ENCODE measurements at regions of chr6 and their contacts with region 1.

Region 1: DNA sequence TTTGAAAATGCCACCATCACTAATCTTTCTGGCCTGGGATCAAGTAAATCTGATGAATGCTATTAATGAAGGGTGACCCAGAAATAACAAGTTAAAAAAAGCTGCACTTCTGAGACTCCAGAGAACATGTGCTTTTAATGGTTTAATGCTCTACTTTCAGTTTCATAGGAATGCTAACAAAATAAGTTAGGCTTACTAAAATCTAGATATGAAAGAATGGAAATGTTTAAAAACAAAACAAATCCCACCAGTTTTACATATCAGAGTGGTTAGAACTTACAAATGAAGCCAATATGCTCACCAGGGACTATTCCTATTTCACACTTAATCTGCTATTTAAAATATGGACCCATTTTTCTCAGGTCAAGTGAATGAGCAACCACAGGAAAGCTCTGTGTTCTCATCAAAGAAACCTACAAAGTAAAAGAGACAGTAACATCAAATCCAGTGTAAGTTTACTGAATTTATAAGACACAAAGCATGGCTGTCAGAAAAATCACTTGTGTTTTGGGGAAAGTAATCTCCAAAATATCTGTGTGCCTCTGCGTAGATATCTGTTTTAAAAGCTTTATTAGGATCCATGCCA is 40.3 kb downstream of the FYN start:
- DNase-seq: peak in 2 of 14 experiments; percentile 27 to 46
- ATAC-seq: no peak
- H3K4me3 ChIP-seq: no peak overlapping the region
- H3K4me3 Mint-ChIP-seq: peak overlapping the region; percentile 80
- H3K27ac ChIP-seq: peak overlapping the region in 1 of 2 donors; percentile 35
- H3K27ac Mint-ChIP-seq: no peak overlapping the region
- H3K4me1 ChIP-seq: peaks cover 52% of the 10 kb centered on the region
- H3K4me1 Mint-ChIP-seq: peaks cover 75% of the 10 kb centered on the region
- H3K27me3 ChIP-seq: no peaks in the 10 kb centered on the region
- H3K27me3 Mint-ChIP-seq: no peaks in the 10 kb centered on the region
- CTCF ChIP-seq: no peak

Region 2: GRCh38 chr6:110063594-110064263 is 1769.2 kb before region 1 on chr6:
- CTCF ChIA-PET with region 1: no interaction called
- POLR2A ChIA-PET with region 1: no interaction called
- intact Hi-C with region 1: no loop called
- DNase-seq: no peak
- ATAC-seq: no peak
- H3K4me3 ChIP-seq: no peak overlapping the region
- H3K4me3 Mint-ChIP-seq: no peak overlapping the region
- H3K27ac ChIP-seq: no peak overlapping the region
- H3K27ac Mint-ChIP-seq: no peak overlapping the region
- H3K4me1 ChIP-seq: no peaks in the 10 kb centered on the region
- H3K4me1 Mint-ChIP-seq: no peaks in the 10 kb centered on the region
- H3K27me3 ChIP-seq: peaks cover 13 to 22% of the 10 kb centered on the region in 2 experiments
- H3K27me3 Mint-ChIP-seq: peaks cover 29% of the 10 kb centered on the region
- CTCF ChIP-seq: no peak

Region 3: DNA sequence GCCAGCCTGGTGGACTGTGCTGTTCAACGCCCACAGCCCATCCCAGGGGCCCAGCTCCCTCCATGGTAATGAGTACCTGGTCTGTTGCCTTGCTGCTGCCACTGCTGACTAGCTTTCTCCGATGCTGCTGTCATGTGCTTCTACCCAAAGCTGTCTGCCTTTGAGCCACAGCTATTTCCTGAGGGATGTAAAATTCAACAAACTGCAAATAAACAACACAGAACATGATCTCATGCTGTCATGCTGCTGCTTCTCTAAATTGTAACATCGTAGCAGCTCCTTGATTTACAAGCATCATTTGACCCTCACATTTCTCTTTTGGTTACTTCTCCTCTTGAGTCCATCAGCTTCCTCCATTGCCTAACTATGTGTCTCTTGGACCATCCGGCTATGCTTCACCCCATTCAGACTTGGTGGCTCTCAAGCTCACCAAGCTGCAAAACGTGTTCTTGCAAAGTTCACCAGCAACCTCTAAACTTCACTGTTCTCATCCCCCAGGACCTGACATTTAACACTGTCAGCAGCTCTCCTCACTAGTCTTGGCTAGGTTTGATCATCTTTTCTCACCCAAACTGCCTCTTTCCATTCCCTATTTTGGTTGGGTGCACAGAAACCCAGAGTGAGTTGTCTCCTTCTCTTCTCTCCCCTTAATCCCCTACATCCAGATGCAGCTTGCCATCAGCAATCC is 14.2 kb before region 1 on chr6:
- CTCF ChIA-PET with region 1: interaction called, 3 read pairs
- POLR2A ChIA-PET with region 1: interaction called, 17 read pairs
- intact Hi-C with region 1: loop called in 1 of 2 experiments (anchors 2 kb)
- DNase-seq: peak in 3 of 14 experiments; percentile 32 to 48 (median 36)
- ATAC-seq: peak; percentile 69
- H3K4me3 ChIP-seq: no peak overlapping the region
- H3K4me3 Mint-ChIP-seq: peak overlapping the region; percentile 40
- H3K27ac ChIP-seq: peak overlapping the region in 1 of 2 donors; percentile 19
- H3K27ac Mint-ChIP-seq: peak overlapping the region; percentile 72
- H3K4me1 ChIP-seq: peaks cover 33% of the 10 kb centered on the region
- H3K4me1 Mint-ChIP-seq: peaks cover 75% of the 10 kb centered on the region
- H3K27me3 ChIP-seq: no peaks in the 10 kb centered on the region
- H3K27me3 Mint-ChIP-seq: no peaks in the 10 kb centered on the region
- CTCF ChIP-seq: no peak

Region 4: GRCh38 chr6:111850295-111850937 is 17.5 kb after region 1 on chr6:
- CTCF ChIA-PET with region 1: interaction called, 3 read pairs
- POLR2A ChIA-PET with region 1: interaction called, 4 read pairs
- intact Hi-C with region 1: loop called (anchors 1 to 2 kb)
- DNase-seq: peak in 3 of 14 experiments; percentile 63 to 67 (median 63)
- ATAC-seq: peak; percentile 51
- H3K4me3 ChIP-seq: no peak overlapping the region
- H3K4me3 Mint-ChIP-seq: peak overlapping the region; percentile 78
- H3K27ac ChIP-seq: peak overlapping the region in 1 of 2 donors; percentile 50
- H3K27ac Mint-ChIP-seq: no peak overlapping the region
- H3K4me1 ChIP-seq: peaks cover 72% of the 10 kb centered on the region
- H3K4me1 Mint-ChIP-seq: peaks cover 66% of the 10 kb centered on the region
- H3K27me3 ChIP-seq: no peaks in the 10 kb centered on the region
- H3K27me3 Mint-ChIP-seq: no peaks in the 10 kb centered on the region
- CTCF ChIP-seq: no peak

Region 5: GRCh38 chr6:111864138-111865048 is 31.5 kb after region 1 on chr6:
- CTCF ChIA-PET with region 1: no interaction called
- POLR2A ChIA-PET with region 1: no interaction called
- intact Hi-C with region 1: no loop called
- DNase-seq: no peak
- ATAC-seq: no peak
- H3K4me3 ChIP-seq: no peak overlapping the region
- H3K4me3 Mint-ChIP-seq: peak overlapping the region; percentile 71
- H3K27ac ChIP-seq: no peak overlapping the region
- H3K27ac Mint-ChIP-seq: peak overlapping the region; percentile 93
- H3K4me1 ChIP-seq: peaks cover 75% of the 10 kb centered on the region
- H3K4me1 Mint-ChIP-seq: peaks cover 100% of the 10 kb centered on the region
- H3K27me3 ChIP-seq: no peaks in the 10 kb centered on the region
- H3K27me3 Mint-ChIP-seq: no peaks in the 10 kb centered on the region
- CTCF ChIP-seq: no peak

Region 6: GRCh38 chr6:112549749-112550148 is 716.8 kb after region 1 on chr6:
- CTCF ChIA-PET with region 1: no interaction called
- POLR2A ChIA-PET with region 1: no interaction called
- intact Hi-C with region 1: no loop called
- DNase-seq: no peak
- ATAC-seq: no peak
- H3K4me3 ChIP-seq: no peak overlapping the region
- H3K4me3 Mint-ChIP-seq: no peak overlapping the region
- H3K27ac ChIP-seq: no peak overlapping the region
- H3K27ac Mint-ChIP-seq: no peak overlapping the region
- H3K4me1 ChIP-seq: no peaks in the 10 kb centered on the region
- H3K4me1 Mint-ChIP-seq: no peaks in the 10 kb centered on the region
- H3K27me3 ChIP-seq: no peaks in the 10 kb centered on the region
- H3K27me3 Mint-ChIP-seq: no peaks in the 10 kb centered on the region
- CTCF ChIP-seq: no peak

Measured in CD4-positive, alpha-beta T cell (primary cell).